ENCODE measurements at regions of chr6 and their contacts with region 1.

Region 1: GRCh38 chr6:75601304-75602245 is at the start of gene SENP6:
- DNase-seq: peak; percentile 84 to 91
- ATAC-seq: peak; percentile 91 to 93 (median 92)
- H3K4me3 ChIP-seq: peak within 1 kb of the TSS; percentile 76
- H3K27ac ChIP-seq: peak within 1 kb of the TSS; percentile 98
- H3K4me1 ChIP-seq: peaks cover 21% of the 10 kb centered on the region
- H3K27me3 ChIP-seq: no peaks in the 10 kb centered on the region
- CTCF ChIP-seq: no peak
- total RNA-seq, gene SENP6: 51.5 to 69.5 (median 63.8) TPM

Region 2: GRCh38 chr6:75284632-75285286 is 316.8 kb before region 1 on chr6 and contains the start of gene TMEM30A:
- intact Hi-C with region 1: loop called in 1 of 2 experiments (anchors 10 kb)
- DNase-seq: peak; percentile 96 to 99
- ATAC-seq: peak; percentile 98 to 100 (median 100)
- H3K4me3 ChIP-seq: peak within 1 kb of the TSS; percentile 94
- H3K27ac ChIP-seq: peak within 1 kb of the TSS; percentile 95
- H3K4me1 ChIP-seq: peaks cover 31% of the 10 kb centered on the region
- H3K27me3 ChIP-seq: no peaks in the 10 kb centered on the region
- CTCF ChIP-seq: no peak
- total RNA-seq, gene TMEM30A: 30.9 to 52.6 (median 41.6) TPM

Region 3: DNA sequence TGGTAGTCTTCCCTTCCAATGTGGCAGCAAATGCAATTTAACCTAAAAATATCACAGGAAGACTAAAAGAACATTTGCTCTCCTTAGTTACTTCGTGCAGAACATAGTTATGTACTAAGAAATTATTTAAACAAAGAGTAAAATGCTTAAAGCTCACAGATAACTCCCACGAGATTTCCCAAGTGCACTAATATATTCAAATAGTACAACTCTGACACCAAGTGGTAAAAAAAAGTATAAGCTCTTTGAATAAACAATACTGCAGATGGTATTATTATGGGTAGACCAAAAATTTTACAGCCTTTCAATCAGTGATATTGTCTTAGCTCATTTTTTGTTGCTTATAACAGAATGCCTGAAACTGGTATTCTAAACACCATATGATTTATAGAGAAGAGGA is 55.2 kb before region 1 on chr6:
- intact Hi-C with region 1: no loop called
- DNase-seq: no peak
- ATAC-seq: no peak
- H3K4me3 ChIP-seq: no peak overlapping the region
- H3K27ac ChIP-seq: no peak overlapping the region
- H3K4me1 ChIP-seq: no peaks in the 10 kb centered on the region
- H3K27me3 ChIP-seq: no peaks in the 10 kb centered on the region
- CTCF ChIP-seq: peak; percentile 17